ENCODE measurements at regions of chr20 and their contacts with region 1.

Region 1: DNA sequence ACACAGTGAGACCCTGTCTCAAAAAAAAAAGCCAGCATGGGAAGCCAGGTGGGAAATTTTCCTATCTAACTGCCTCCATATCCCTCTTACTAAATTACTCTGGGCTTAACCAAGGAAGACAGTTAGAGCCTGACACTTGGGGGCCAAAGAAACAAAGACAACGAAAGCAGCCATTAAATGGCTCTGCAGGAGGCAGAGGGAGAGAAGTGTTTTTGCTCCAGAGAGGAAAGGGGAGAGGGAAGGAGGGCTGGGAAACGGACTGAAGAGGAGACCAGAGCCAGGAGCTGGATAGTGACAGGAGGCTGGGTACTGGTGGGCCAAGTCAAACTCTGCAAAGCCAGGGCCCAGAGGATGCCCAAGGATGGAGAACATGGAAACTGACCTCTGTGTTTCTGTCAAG is 10.7 kb upstream of the TGIF2 start:
- DNase-seq: no peak
- ATAC-seq: no peak
- H3K4me3 ChIP-seq: no peak overlapping the region
- H3K27ac ChIP-seq: no peak overlapping the region
- H3K4me1 ChIP-seq: no peaks in the 10 kb centered on the region
- H3K27me3 ChIP-seq: no peaks in the 10 kb centered on the region
- CTCF ChIP-seq: no peak

Region 2: DNA sequence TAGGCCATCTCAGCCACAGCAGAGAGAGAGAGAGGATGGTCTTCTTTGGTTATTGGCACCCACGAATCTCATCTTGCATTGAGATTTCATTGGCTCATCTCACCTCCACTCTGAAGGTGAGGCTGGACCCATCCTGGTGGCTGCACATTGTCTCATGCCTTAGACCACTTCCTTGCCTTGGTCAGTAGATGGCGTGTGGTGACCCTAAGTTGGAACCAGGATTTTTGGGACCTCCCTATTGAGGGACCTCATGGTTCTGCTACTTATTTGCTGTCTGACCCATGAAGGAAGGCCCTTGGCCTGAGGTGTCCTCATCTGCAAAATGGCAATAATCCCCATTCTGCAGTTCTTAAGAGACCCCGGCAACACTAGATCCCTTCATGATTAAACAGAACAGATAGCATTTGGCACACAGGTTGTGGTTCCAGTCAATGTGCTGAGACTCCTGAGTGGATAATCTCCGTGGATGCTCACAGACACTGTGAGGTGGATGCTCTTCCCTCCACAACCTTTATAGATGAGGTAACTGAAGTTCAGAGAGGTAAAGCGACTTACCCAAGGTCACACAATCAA is 348.0 kb before region 1 on chr20:
- CTCF ChIA-PET with region 1: no interaction called
- POLR2A ChIA-PET with region 1: no interaction called
- in situ Hi-C with region 1: no loop called
- intact Hi-C with region 1: no loop called
- DNase-seq: peak; percentile 22
- ATAC-seq: peak; percentile 83
- H3K4me3 ChIP-seq: no peak overlapping the region
- H3K27ac ChIP-seq: no peak overlapping the region
- H3K4me1 ChIP-seq: no peaks in the 10 kb centered on the region
- H3K27me3 ChIP-seq: no peaks in the 10 kb centered on the region
- CTCF ChIP-seq: peak; percentile 86

Region 3: GRCh38 chr20:36573103-36573794 is 10.5 kb after region 1 on chr20 and contains the start of gene TGIF2:
- CTCF ChIA-PET with region 1: interaction called, 3 read pairs
- POLR2A ChIA-PET with region 1: interaction called, 12 read pairs
- in situ Hi-C with region 1: no loop called
- intact Hi-C with region 1: no loop called
- DNase-seq: no peak
- ATAC-seq: peak; percentile 89
- H3K4me3 ChIP-seq: peak within 1 kb of the TSS; percentile 61 to 65
- H3K27ac ChIP-seq: peak within 1 kb of the TSS; percentile 92
- H3K4me1 ChIP-seq: peaks cover 20% of the 10 kb centered on the region
- H3K27me3 ChIP-seq: no peaks in the 10 kb centered on the region
- CTCF ChIP-seq: no peak
- total RNA-seq, gene TGIF2: 18.0 TPM

Region 4: GRCh38 chr20:36585463-36586108 is 22.9 kb after region 1 on chr20:
- CTCF ChIA-PET with region 1: interaction called, 10 read pairs
- POLR2A ChIA-PET with region 1: no interaction called
- in situ Hi-C with region 1: no loop called
- intact Hi-C with region 1: no loop called
- DNase-seq: no peak
- ATAC-seq: no peak; the same call in 1 of the 2 replicates
- H3K4me3 ChIP-seq: no peak overlapping the region
- H3K27ac ChIP-seq: no peak overlapping the region
- H3K4me1 ChIP-seq: peaks cover 5% of the 10 kb centered on the region; the same call in 1 of the 2 replicates
- H3K27me3 ChIP-seq: no peaks in the 10 kb centered on the region
- CTCF ChIP-seq: no peak

Measured in Panc1 (cell line).